Posterior vena cava (tissue), 2 donors: ENCODE measurements at regions of chr11 and their contacts with region 1.

Region 1: DNA sequence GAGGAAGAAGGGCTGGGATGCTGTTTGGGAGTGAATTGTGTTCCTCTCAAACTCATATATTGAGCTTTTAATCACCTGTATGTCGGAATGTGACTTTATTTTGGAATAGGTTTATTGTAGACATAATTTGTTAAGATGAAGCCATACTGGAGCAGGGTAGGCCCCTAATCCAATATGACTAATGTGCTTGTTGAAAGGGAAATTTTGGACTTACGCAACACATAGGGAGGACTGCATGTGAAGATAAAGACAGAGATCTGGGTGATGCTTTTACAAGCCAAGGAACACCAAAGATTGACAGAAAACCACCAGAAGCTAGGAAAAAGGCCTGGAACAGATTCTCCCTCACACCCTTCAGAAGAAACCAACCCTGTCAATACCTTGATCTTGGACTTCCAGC is 43.2 kb upstream of the OVCH2 start:
- DNase-seq: no peak

Region 2: GRCh38 chr11:7804226-7804625 is 54.8 kb after region 1 on chr11:
- intact Hi-C with region 1: loop called in 1 of 2 experiments (anchors 2 kb)
- DNase-seq: no peak